Ovary (tissue), 10 donors: ENCODE measurements at regions of chr3 and their contacts with region 1.

Region 1: DNA sequence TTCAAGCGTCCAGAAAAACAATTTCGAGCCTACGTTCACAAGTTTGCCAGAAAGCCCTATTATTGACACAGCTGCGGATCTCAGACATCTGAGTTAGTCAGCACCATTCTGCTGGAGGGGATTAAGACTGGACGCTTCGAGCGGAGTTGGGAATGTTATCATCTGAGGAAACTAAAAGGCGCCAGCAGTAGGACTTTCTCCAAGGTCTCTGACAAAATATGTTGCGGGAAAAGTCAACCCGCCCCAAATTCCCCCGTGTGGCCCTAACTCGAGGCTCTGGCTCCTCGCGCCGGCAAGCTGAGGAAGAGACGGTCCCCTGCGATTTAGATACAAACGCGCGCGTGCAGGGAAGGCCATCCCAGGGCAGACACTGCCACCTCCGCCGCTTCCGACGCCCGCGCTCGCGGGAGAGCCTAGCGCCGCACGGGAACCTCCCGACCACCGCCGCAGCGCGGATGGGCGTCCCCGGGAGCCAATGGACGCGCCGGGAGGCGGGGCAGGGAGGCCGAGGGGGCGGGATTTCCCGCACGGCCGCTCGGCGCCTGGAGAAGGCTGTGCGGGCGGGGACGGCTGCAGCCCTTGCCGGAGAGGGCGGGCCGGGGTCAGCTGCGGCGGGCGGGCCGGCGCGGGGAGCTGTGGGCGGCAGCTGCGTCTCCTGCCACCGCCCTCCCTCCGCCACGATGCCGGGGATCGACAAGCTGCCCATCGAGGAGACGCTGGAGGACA is at the start of gene APPL1:
- DNase-seq: peak; percentile 93 to 96 (median 94)
- H3K4me3 ChIP-seq: peak within 1 kb of the TSS; percentile 96
- H3K27ac ChIP-seq: peak within 1 kb of the TSS; percentile 79 to 98
- H3K4me1 ChIP-seq: peaks cover 7% of the 10 kb centered on the region
- H3K27me3 ChIP-seq: no peaks in the 10 kb centered on the region
- CTCF ChIP-seq: no peak
- EP300 ChIP-seq: no peak
- POLR2A ChIP-seq: peak; percentile 91
- total RNA-seq, gene APPL1: 33.9 to 69.6 (median 50.9) TPM

Region 2: DNA sequence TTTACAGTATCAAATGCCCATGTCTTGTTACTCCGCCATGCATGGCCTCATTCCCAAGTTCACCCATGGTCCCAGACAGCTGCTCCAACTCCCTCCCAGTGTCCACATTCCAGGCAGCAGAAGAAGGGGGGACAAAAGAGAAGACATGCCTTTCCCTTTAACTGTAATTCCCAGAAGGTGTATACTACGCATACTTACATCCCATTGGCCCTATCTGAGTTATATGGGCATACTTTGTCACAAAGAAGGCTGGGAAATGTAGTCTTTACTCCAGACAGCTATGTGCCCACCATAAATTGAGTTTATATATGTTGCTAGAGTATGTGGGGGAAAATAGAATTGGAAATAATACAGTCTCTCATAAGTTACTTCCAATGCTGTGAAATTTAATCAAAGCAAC is 829.6 kb before region 1 on chr3:
- intact Hi-C with region 1: no loop called
- DNase-seq: no peak
- H3K4me3 ChIP-seq: no peak overlapping the region
- H3K27ac ChIP-seq: no peak overlapping the region
- H3K4me1 ChIP-seq: peaks cover 3% of the 10 kb centered on the region
- H3K27me3 ChIP-seq: no peaks in the 10 kb centered on the region
- CTCF ChIP-seq: no peak
- EP300 ChIP-seq: no peak
- POLR2A ChIP-seq: no peak

Region 3: DNA sequence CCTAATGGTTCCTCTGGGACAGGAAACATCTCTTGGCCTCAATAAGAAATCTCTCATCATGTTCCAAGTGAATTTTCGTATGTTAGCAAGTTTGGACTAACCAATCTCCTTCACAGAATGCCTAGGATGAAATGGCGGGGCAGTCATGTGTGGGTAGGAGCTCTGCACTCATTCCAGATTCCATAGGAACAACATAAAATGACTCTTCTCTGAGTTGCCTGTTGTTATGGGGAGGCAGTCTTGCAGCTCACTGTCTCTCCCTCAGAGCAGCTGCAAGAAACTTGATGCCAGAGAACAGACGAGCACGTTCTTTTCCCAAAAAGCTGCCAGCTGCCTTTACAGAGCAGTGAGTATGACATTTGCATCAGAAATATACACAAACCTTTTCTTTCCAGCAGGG is 132.8 kb before region 1 on chr3:
- intact Hi-C with region 1: loop called in 2 of 4 experiments (anchors 5 to 10 kb)
- DNase-seq: peak in 1 of 5 donors; percentile 17
- H3K4me3 ChIP-seq: no peak overlapping the region
- H3K27ac ChIP-seq: peak overlapping the region in 1 of 2 donors; percentile 60
- H3K4me1 ChIP-seq: peaks cover 8% of the 10 kb centered on the region
- H3K27me3 ChIP-seq: no peaks in the 10 kb centered on the region
- CTCF ChIP-seq: no peak
- EP300 ChIP-seq: no peak
- POLR2A ChIP-seq: no peak

Region 4: DNA sequence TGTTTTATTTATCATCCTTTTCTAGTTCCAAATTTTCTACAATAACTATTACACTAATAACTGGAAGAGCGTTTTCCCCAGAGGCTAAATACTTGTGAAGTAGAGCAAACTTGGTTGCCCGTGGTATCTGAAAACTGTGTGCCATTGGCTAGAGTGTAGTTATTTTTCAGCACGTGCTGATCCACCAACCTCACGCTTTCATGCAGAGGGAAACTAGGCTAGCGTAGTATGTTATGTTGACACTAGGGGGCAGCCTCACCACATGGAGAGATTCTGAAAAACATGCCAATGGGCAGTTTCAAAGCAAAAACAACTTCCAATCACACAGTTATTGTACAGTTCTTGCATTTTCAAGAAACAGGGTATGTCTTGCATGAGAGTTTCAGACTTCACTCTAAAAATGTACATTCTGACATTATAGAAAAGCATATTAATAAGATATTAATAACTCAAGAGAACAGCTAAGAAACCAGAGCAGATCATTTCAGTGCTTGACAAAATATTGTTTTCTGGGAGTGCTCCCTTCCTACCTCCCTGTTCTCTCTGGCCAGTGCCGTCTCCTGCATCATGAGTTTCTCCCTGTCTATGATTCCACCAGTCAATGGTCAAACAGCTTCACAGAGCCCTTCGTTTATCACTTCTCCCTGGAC is 127.2 kb before region 1 on chr3:
- intact Hi-C with region 1: loop called in 2 of 4 experiments (anchors 5 to 10 kb)
- DNase-seq: peak; percentile 62 to 85 (median 69)
- H3K4me3 ChIP-seq: no peak overlapping the region
- H3K27ac ChIP-seq: no peak overlapping the region
- H3K4me1 ChIP-seq: no peaks in the 10 kb centered on the region
- H3K27me3 ChIP-seq: no peaks in the 10 kb centered on the region
- CTCF ChIP-seq: peak; percentile 64 to 92 (median 89)
- EP300 ChIP-seq: no peak
- POLR2A ChIP-seq: no peak